ENCODE measurements at regions of chr6 and their contacts with region 1.

Region 1: GRCh38 chr6:99905209-99906106 is 88.6 kb downstream of the MCHR2 start:
- DNase-seq: peak; percentile 62
- H3K27ac ChIP-seq: no peak overlapping the region
- CTCF ChIP-seq: peak; percentile 63

Region 2: DNA sequence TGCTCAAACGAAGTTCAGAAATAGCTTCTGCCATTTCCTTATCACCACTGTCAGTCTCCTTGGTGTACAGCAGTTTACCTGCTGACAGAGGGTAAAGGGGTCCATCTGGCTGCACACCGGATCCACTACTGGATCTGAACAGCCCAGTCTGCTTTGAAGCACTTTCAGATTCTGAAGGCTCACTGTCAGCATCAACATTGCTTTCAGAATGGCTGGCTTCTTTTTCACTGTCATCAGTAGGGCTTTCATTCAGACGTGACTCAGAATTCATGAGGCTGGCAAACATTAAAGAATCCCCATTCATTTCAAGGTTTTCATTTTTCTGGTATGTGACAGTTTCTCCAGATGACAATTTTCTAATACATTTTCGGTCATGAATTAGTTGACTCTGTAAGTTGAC is 459.4 kb before region 1 on chr6:
- CTCF ChIA-PET with region 1: no interaction called
- POLR2A ChIA-PET with region 1: no interaction called
- DNase-seq: no peak
- H3K27ac ChIP-seq: no peak overlapping the region
- CTCF ChIP-seq: no peak

Region 3: GRCh38 chr6:99868074-99868702 is 37.3 kb before region 1 on chr6:
- CTCF ChIA-PET with region 1: interaction called, 15 read pairs
- POLR2A ChIA-PET with region 1: no interaction called
- DNase-seq: peak; percentile 53
- H3K27ac ChIP-seq: no peak overlapping the region
- CTCF ChIP-seq: peak; percentile 88

Region 4: DNA sequence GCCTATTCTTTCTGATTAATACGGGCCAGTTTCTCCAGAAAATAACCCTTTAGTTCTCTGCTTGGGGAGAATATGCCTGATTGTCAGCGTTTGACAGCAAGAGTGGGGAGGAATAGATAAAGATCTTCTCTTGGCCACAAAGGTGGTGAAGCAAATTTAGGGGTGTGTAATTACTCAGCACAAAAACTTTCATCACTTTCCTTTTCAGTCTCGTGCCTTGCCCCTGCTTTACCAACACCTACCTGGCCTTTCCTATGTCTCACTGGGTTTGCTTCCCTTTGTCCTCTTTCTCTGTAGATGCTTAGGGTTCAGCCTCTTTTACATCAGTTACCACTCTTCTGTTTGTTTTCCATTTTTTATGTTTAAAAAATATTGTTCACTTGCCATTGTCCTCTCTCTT is 10.6 kb before region 1 on chr6:
- CTCF ChIA-PET with region 1: no interaction called
- POLR2A ChIA-PET with region 1: no interaction called
- DNase-seq: no peak
- H3K27ac ChIP-seq: no peak overlapping the region
- CTCF ChIP-seq: no peak